A673 (cell line): ENCODE measurements at regions of chr11 and their contacts with region 1.

Region 1: DNA sequence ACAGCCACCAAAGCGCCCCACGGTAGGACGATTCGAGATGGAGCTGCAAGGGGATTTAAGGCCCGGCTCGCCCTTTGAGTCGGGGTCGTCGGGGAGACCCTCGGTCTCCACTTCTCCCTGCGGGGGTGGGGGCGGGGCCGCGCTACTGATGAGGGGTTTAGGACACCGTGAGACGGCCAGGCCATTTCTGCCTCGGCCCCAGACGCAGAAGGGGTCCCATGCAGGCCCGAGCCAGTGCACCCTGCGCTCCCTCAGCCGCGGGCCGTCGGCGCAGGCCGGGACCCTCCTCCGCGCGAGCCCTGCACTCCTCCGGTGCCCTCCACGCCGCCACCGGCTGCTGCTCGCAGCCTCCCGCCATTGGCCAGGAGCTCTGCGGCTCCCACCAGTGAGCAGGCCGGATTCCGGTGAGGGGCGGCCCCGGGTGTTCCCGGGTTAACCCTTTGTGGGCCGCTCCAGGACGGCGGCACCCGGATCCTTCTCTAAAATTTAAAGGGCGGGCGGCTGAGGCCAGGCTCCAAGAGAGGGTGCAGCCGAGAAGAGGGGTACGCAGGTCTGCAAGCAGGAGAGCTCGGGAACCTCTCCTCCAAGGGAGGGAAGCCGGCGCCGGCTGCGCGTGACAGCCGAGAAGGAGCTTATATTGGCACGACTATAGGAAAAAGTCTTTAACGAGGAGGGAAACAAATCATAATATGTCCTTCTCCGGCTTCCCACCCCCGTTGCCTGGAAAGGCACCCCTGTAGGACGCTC is 18.0 kb downstream of the CREB3L1 start:
- DNase-seq: peak; percentile 97
- H3K4me3 ChIP-seq: peak overlapping the region; percentile 50
- H3K27ac ChIP-seq: peak overlapping the region; percentile 22
- H3K4me1 ChIP-seq: peaks cover 32% of the 10 kb centered on the region
- H3K27me3 ChIP-seq: no peaks in the 10 kb centered on the region
- CTCF ChIP-seq: no peak

Region 2: GRCh38 chr11:44651535-44652155 is 1643.8 kb before region 1 on chr11:
- CTCF ChIA-PET with region 1: no interaction called
- POLR2A ChIA-PET with region 1: no interaction called
- intact Hi-C with region 1: no loop called
- DNase-seq: no peak
- H3K4me3 ChIP-seq: no peak overlapping the region
- H3K27ac ChIP-seq: no peak overlapping the region
- H3K4me1 ChIP-seq: no peaks in the 10 kb centered on the region
- H3K27me3 ChIP-seq: peaks cover 33% of the 10 kb centered on the region
- CTCF ChIP-seq: no peak

Region 3: DNA sequence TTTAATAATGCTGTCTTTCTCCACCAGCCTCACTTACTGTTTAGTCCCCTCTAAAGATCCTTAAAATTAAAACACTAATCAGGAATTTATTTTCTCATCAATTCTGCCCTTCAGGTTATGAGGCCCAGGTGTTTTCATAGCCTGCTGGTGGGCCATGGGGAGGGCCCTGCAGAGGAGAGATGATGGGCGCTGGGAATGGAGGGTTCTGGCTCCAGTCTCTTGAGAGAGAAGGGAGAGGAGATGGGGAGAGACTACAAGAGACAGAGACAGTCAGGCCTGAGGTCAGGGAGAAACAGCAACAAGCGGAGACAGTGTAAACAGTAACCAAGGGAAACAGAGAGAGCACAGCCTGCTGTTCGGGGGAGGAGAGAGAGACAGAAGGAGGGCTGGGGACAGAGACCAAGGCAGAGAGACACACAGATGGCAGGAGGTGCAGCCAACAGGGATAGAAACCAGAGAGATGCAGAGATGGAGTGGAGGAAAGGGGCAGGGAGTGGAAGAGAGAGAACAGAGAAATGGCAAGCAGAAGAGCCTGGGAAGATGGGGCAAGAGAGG is 822.1 kb before region 1 on chr11:
- CTCF ChIA-PET with region 1: no interaction called
- POLR2A ChIA-PET with region 1: no interaction called
- intact Hi-C with region 1: no loop called
- DNase-seq: no peak
- H3K4me3 ChIP-seq: no peak overlapping the region
- H3K27ac ChIP-seq: no peak overlapping the region
- H3K4me1 ChIP-seq: no peaks in the 10 kb centered on the region
- H3K27me3 ChIP-seq: no peaks in the 10 kb centered on the region
- CTCF ChIP-seq: no peak

Region 4: GRCh38 chr11:46249103-46249937 is 46.2 kb before region 1 on chr11:
- CTCF ChIA-PET with region 1: interaction called, 4 read pairs
- POLR2A ChIA-PET with region 1: interaction called, 10 read pairs
- intact Hi-C with region 1: loop called (anchors 5 kb)
- DNase-seq: peak; percentile 57
- H3K4me3 ChIP-seq: no peak overlapping the region
- H3K27ac ChIP-seq: peak overlapping the region; percentile 42
- H3K4me1 ChIP-seq: peaks cover 9% of the 10 kb centered on the region
- H3K27me3 ChIP-seq: no peaks in the 10 kb centered on the region
- CTCF ChIP-seq: no peak

Region 5: DNA sequence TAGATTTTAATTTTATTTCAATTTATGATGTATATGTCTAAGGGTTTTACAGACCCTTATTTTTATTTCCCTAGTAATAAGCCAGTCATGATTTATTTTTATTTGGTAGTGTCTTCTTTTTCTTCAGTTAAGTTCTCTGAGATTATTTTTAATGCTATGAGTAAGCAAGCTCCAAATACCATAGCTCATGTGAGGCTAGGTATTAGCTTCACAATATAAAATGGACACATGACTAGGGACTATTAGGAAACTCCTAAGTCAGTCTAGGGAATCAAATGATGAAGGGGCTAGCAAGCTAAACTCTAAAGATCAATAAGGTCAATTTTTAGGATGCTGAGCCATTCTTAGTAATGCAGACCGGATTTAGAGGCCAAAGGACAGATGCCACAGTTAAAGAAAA is 504.7 kb after region 1 on chr11:
- CTCF ChIA-PET with region 1: no interaction called
- POLR2A ChIA-PET with region 1: no interaction called
- intact Hi-C with region 1: no loop called
- DNase-seq: no peak
- H3K4me3 ChIP-seq: no peak overlapping the region
- H3K27ac ChIP-seq: no peak overlapping the region
- H3K4me1 ChIP-seq: no peaks in the 10 kb centered on the region
- H3K27me3 ChIP-seq: no peaks in the 10 kb centered on the region
- CTCF ChIP-seq: no peak